Ascending aorta (tissue), 2 donors: ENCODE measurements at regions of chr19 and their contacts with region 1.

Region 1: DNA sequence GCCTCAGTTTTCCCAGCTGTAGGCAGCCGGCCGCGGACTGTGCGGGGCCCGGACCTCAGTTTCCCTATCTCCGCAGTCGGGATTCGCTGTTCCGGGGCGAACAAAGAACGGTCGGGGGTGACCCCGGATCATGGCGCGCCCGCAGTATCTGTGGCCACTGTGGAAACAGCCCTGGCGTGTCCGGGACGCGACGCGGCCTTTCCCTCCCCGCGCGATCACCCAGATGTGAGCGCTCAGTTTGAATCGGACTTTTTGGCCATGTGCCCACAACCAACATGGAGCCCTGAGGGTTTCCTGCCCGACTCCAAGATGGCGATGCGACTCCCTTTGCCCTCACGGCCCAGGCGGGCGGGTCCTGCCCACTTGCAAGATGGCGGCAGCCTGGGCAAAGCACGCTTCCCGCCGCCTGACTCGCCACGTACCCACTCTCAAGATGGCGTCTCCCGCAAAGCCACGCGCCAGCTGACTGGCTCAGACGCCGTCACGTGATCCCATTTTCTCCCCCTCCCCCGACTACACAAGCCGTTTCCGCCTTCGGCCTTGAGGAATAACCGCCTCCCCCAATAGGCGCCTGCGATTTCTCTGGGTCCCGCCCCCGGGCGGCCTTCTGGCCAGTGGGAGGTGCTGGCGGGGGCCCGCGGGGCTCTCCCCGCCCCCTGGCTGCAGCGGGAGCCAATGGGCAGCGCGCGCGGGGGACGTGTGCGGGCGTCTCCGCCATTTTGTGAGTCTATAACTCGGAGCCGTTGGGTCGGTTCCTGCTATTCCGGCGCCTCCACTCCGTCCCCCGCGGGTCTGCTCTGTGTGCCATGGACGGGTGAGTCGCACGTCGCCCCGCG is at the start of gene PTBP1:
- DNase-seq: peak; percentile 100
- H3K4me3 ChIP-seq: peak within 1 kb of the TSS; percentile 96 to 98
- H3K27ac ChIP-seq: peak within 1 kb of the TSS; percentile 84 to 99
- H3K4me1 ChIP-seq: peaks cover 34 to 46% of the 10 kb centered on the region in 2 donors
- H3K27me3 ChIP-seq: no peaks in the 10 kb centered on the region
- CTCF ChIP-seq: no peak
- total RNA-seq, gene PTBP1: 210 TPM

Region 2: GRCh38 chr19:531009-531752 is 265.7 kb before region 1 on chr19:
- intact Hi-C with region 1: loop called (anchors 2 kb)
- DNase-seq: peak in 1 of 2 donors; percentile 89
- H3K4me3 ChIP-seq: peak overlapping the region; percentile 91 to 99
- H3K27ac ChIP-seq: peak overlapping the region; percentile 88 to 95
- H3K4me1 ChIP-seq: peaks cover 16 to 24% of the 10 kb centered on the region in 2 donors
- H3K27me3 ChIP-seq: no peaks in the 10 kb centered on the region
- CTCF ChIP-seq: peak in 1 of 3 experiments; percentile 6

Region 3: GRCh38 chr19:572140-572742 is 224.7 kb before region 1 on chr19 and contains the start of gene BSG:
- intact Hi-C with region 1: loop called (anchors 5 kb)
- DNase-seq: peak; percentile 86 to 98
- H3K4me3 ChIP-seq: peak within 1 kb of the TSS; percentile 72 to 100
- H3K27ac ChIP-seq: peak within 1 kb of the TSS; percentile 74 to 89
- H3K4me1 ChIP-seq: peaks cover 11 to 39% of the 10 kb centered on the region in 2 donors
- H3K27me3 ChIP-seq: no peaks in the 10 kb centered on the region
- CTCF ChIP-seq: peak in 1 of 3 experiments; percentile 18
- total RNA-seq, gene BSG: 647 TPM

Region 4: GRCh38 chr19:680287-681028 is 116.5 kb before region 1 on chr19:
- intact Hi-C with region 1: loop called (anchors 1 kb)
- DNase-seq: peak; percentile 98 to 100
- H3K4me3 ChIP-seq: peak overlapping the region; percentile 88 to 93
- H3K27ac ChIP-seq: peak overlapping the region; percentile 97 to 98
- H3K4me1 ChIP-seq: peaks cover 9 to 21% of the 10 kb centered on the region in 2 donors
- H3K27me3 ChIP-seq: no peaks in the 10 kb centered on the region
- CTCF ChIP-seq: peak; percentile 21 to 76 (median 35)

Region 5: DNA sequence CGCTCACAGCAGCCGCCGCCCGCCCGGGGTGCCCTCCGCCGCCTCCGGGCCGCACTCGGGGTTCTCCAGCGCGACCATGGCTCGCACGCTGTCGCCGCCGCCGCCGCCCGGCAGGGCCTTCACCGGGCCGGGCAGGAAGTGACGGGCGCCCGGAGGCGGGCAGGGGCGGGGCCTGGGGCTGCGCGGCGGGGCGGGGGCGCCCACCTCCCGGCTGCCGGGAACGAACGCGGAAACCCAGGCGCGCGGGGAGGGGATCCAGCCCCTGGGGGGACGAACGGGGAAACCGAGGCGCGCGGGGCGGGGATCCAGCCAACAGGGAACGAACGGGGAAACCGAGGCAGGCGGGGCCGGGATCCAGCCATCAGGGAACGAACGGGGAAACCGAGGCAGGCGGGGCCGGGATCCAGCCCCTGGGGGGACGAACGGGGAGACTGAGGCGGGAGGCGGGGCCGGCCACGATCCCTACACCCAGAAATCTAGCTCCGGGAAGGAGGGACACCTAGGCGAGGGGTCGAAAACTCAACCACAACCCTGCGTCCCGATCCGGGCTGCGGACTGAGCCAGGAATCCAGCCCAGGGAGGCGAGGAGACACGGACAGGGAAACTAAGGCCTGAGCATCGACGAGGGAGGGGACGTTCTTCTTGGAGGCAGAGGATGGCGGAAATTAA is 116.3 kb after region 1 on chr19 and contains the start of gene R3HDM4:
- intact Hi-C with region 1: loop called (anchors 5 kb)
- DNase-seq: peak in 1 of 2 donors; percentile 86
- H3K4me3 ChIP-seq: peak within 1 kb of the TSS; percentile 93 to 95
- H3K27ac ChIP-seq: peak within 1 kb of the TSS; percentile 84 to 91
- H3K4me1 ChIP-seq: peaks cover 6 to 19% of the 10 kb centered on the region in 2 donors
- H3K27me3 ChIP-seq: peaks cover 15% of the 10 kb centered on the region
- CTCF ChIP-seq: no peak
- total RNA-seq, gene R3HDM4: 81.5 TPM